ENCODE measurements at regions of chr4 and their contacts with region 1.

Region 1: DNA sequence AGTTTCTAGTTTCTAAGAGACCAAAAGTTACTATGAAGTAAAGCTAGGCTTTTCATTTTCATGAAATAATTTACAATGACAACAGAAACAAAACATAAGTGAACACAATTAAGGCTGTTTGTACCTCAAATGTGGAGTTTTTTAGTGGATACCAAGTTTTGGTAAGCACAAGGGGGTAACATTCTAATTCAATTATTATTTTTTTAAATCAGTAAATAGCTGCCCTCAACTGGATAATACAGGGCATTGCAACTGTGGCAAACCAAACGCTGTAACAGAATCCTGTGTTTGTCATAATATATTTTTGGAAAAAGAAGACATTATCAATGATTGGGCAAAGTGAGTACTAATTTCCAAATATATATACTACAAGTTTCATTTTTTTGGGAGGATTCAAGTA is 150.3 kb downstream of the FBXW7 start:
- DNase-seq: peak in 1 of 2 donors; percentile 15
- ATAC-seq: peak; percentile 37 to 59
- H3K4me3 ChIP-seq: no peak overlapping the region
- H3K27ac ChIP-seq: no peak overlapping the region
- H3K4me1 ChIP-seq: peaks cover 10 to 11% of the 10 kb centered on the region in 2 donors
- H3K27me3 ChIP-seq: no peaks in the 10 kb centered on the region
- CTCF ChIP-seq: peak; percentile 26 to 84 (median 58)
- POLR2A ChIP-seq: no peak

Region 2: GRCh38 chr4:151117371-151117962 is 1268.1 kb before region 1 on chr4:
- in situ Hi-C with region 1: no loop called
- intact Hi-C with region 1: loop called (anchors 10 kb)
- DNase-seq: peak in 1 of 2 donors; percentile 37
- ATAC-seq: peak; percentile 71 to 85
- H3K4me3 ChIP-seq: no peak overlapping the region
- H3K27ac ChIP-seq: peak overlapping the region in 1 of 4 donors; percentile 28
- H3K4me1 ChIP-seq: no peaks in the 10 kb centered on the region
- H3K27me3 ChIP-seq: no peaks in the 10 kb centered on the region
- CTCF ChIP-seq: peak; percentile 18 to 64 (median 55)
- POLR2A ChIP-seq: no peak

Region 3: DNA sequence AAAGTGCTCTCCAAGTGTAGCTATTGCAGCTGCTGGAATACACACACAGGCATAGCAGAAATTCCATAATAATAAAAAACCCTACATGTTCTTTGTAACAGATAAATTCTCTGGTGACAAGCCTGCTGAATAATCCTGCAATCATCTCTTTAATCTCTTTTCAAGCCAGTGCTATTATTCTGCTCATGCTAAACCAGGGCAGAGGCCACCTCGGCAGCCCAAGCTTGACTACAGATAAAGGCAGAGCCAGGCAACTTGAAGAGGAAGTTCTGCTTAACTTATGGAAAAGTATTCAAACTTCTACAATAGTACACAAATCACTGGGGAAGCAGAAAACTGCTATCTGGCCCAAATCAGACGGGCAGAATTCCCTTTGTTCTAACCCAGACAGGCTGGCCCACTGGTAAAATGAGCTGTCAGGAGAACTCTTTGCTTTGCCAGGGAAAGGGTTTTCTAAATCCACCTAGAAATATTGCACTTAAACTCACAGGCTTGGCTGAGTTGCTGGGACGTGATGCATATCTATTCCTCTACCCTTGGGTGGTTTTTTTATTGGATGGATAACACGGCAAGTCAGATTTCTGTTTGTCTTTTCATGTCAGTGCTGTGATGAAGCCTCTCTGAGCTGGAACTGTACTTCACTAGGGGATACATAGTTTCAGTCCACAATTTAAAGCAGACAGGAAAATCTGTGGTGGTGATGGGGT is 695.2 kb before region 1 on chr4:
- in situ Hi-C with region 1: no loop called
- intact Hi-C with region 1: loop called (anchors 5 kb)
- DNase-seq: no peak
- ATAC-seq: no peak
- H3K4me3 ChIP-seq: no peak overlapping the region
- H3K27ac ChIP-seq: peak overlapping the region; percentile 83 to 92 (median 91)
- H3K4me1 ChIP-seq: peaks cover 87 to 89% of the 10 kb centered on the region in 2 donors
- H3K27me3 ChIP-seq: no peaks in the 10 kb centered on the region
- CTCF ChIP-seq: no peak
- POLR2A ChIP-seq: no peak

Region 4: DNA sequence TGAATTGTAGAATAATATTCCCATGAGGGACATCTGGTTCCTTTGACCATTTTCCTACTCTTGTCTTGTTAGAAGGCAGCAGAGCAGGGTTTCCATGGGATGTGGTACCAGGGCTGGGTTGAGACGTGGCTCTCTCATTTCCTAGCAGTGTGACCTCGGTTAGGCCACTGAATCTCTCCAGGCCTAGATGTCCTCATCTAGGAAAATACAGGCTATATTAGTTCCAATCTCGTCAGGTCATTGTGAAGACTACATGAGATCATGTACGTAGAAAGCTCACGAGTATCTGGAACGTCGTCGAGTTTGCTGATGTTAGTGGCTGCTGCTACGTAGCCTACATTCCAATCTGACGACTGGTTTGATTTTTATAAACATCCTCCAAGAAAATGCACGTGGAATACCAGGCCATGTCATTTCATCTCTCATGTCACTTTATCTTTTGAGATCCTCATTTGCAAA is 346.5 kb before region 1 on chr4:
- in situ Hi-C with region 1: no loop called
- intact Hi-C with region 1: loop called (anchors 5 kb)
- DNase-seq: no peak
- ATAC-seq: peak; percentile 69 to 77
- H3K4me3 ChIP-seq: no peak overlapping the region
- H3K27ac ChIP-seq: peak overlapping the region; percentile 58 to 84 (median 80)
- H3K4me1 ChIP-seq: peaks cover 16 to 21% of the 10 kb centered on the region in 2 donors
- H3K27me3 ChIP-seq: no peaks in the 10 kb centered on the region
- CTCF ChIP-seq: no peak
- POLR2A ChIP-seq: peak in 1 of 2 donors; percentile 29

Region 5: DNA sequence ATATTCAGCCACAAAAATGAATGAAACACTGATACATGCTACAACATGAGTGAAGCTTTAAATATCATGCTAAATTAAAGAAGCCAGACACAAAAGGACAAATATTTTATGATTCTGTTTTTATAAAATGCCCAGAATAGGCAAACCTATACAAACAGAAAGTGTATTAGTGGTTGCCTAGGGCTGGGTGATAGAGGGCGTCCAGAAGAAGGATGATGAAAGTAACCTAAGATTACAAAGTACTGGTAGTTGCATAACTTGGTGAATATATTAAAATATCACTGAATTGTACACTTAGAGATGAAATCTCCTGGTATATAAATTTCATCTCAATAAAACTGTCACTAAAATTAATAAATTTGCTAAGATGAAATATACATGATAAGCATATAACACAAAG is 82.9 kb after region 1 on chr4:
- in situ Hi-C with region 1: no loop called
- intact Hi-C with region 1: no loop called
- DNase-seq: no peak
- ATAC-seq: no peak
- H3K4me3 ChIP-seq: no peak overlapping the region
- H3K27ac ChIP-seq: no peak overlapping the region
- H3K4me1 ChIP-seq: no peaks in the 10 kb centered on the region
- H3K27me3 ChIP-seq: no peaks in the 10 kb centered on the region
- CTCF ChIP-seq: no peak
- POLR2A ChIP-seq: no peak

Region 6: GRCh38 chr4:152535903-152536544 is 150.5 kb after region 1 on chr4 and contains the start of gene FBXW7:
- in situ Hi-C with region 1: no loop called
- intact Hi-C with region 1: loop called (anchors 10 kb)
- DNase-seq: peak; percentile 96 to 98
- ATAC-seq: peak; percentile 95 to 96
- H3K4me3 ChIP-seq: peak within 1 kb of the TSS; percentile 80 to 99 (median 96)
- H3K27ac ChIP-seq: peak within 1 kb of the TSS; percentile 84 to 95 (median 92)
- H3K4me1 ChIP-seq: peaks cover 40 to 53% of the 10 kb centered on the region in 2 donors
- H3K27me3 ChIP-seq: no peaks in the 10 kb centered on the region
- CTCF ChIP-seq: no peak
- POLR2A ChIP-seq: peak; percentile 80 to 87
- total RNA-seq, gene FBXW7: 23.5 to 40.8 (median 28.8) TPM

Measured in gastrocnemius medialis (tissue), 4 donors.